Common myeloid progenitor, CD34-positive (primary cell): ENCODE measurements at regions of chr1 and their contacts with region 1.

Region 1: GRCh38 chr1:983799-984473 is 2.0 kb upstream of the PERM1 start:
- DNase-seq: peak in 2 of 3 donors; percentile 40 to 50
- H3K4me3 ChIP-seq: no peak overlapping the region
- H3K27ac ChIP-seq: no peak overlapping the region
- H3K4me1 ChIP-seq: peaks cover 0 to 1% (median 0%) of the 10 kb centered on the region in 4 experiments
- H3K27me3 ChIP-seq: peaks cover 0 to 52% (median 13%) of the 10 kb centered on the region in 5 experiments

Region 2: GRCh38 chr1:995665-996633 is 12.0 kb after region 1 on chr1:
- CTCF ChIA-PET with region 1: interaction called, 58 read pairs
- POLR2A ChIA-PET with region 1: interaction called, 3 read pairs
- DNase-seq: peak in 2 of 3 donors; percentile 61
- H3K4me3 ChIP-seq: no peak overlapping the region
- H3K27ac ChIP-seq: no peak overlapping the region
- H3K4me1 ChIP-seq: peaks cover 0 to 35% (median 34%) of the 10 kb centered on the region in 4 experiments
- H3K27me3 ChIP-seq: peaks cover 0 to 72% (median 10%) of the 10 kb centered on the region in 5 experiments

Region 3: GRCh38 chr1:1001461-1002204 is 17.7 kb after region 1 on chr1:
- CTCF ChIA-PET with region 1: interaction called, 17 read pairs
- POLR2A ChIA-PET with region 1: interaction called, 3 read pairs
- DNase-seq: peak in 1 of 3 donors; percentile 43
- H3K4me3 ChIP-seq: peak overlapping the region in 4 of 7 experiments; percentile 1 to 66 (median 31)
- H3K27ac ChIP-seq: peak overlapping the region in 1 of 2 experiments; percentile 49
- H3K4me1 ChIP-seq: peaks cover 0 to 65% (median 63%) of the 10 kb centered on the region in 4 experiments
- H3K27me3 ChIP-seq: peaks cover 0 to 70% (median 14%) of the 10 kb centered on the region in 5 experiments

Region 4: DNA sequence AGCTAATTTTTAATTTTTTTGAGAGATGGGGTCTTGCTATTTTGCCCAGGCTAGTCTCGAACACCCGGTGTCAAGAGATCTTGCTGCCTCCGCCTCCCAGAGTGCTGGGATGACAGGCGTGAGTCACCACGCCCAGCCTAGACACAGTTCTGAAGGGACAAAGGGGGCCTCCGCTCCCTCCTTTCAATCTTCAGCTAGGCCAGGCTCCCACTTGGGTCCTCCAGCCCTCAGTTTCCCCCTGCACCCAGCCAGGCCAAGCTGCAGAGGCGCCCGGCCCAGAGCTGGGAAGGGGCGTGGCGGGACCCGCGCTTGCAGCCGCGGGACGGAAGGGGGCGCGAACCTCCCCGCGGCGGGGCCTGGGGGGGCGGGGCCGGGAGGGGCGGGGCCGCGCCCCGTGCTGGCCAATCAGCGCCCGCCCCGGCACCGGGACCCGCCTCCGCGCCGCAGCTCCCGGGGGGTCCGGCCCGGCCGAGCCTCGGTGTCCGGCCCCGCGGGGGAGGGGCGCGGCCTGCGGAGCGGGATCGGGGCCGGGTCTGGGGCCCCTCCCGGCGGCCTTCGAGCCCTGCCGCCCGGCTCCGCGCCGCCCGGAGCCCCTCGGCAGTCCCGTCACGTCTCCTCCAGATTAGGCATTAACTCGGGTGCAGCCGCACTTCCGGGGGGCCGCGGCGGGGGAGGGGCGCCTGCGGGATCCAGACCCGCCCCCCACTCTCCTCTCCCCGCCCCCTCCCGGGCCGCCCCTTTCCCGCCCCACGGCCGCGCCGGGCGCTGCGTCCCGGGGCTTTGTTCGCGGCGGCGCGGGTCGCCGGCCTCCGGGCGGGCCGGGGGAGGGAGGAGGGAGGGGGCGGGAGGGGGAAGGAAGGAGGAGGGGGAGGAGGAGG is 35.4 kb after region 1 on chr1:
- CTCF ChIA-PET with region 1: interaction called, 17 read pairs
- POLR2A ChIA-PET with region 1: no interaction called
- DNase-seq: peak; percentile 61 to 77 (median 72)
- H3K4me3 ChIP-seq: peak overlapping the region in 5 of 7 experiments; percentile 28 to 71 (median 57)
- H3K27ac ChIP-seq: no peak overlapping the region
- H3K4me1 ChIP-seq: peaks cover 0 to 26% (median 21%) of the 10 kb centered on the region in 4 experiments
- H3K27me3 ChIP-seq: peaks cover 0 to 37% (median 8%) of the 10 kb centered on the region in 5 experiments

Region 5: DNA sequence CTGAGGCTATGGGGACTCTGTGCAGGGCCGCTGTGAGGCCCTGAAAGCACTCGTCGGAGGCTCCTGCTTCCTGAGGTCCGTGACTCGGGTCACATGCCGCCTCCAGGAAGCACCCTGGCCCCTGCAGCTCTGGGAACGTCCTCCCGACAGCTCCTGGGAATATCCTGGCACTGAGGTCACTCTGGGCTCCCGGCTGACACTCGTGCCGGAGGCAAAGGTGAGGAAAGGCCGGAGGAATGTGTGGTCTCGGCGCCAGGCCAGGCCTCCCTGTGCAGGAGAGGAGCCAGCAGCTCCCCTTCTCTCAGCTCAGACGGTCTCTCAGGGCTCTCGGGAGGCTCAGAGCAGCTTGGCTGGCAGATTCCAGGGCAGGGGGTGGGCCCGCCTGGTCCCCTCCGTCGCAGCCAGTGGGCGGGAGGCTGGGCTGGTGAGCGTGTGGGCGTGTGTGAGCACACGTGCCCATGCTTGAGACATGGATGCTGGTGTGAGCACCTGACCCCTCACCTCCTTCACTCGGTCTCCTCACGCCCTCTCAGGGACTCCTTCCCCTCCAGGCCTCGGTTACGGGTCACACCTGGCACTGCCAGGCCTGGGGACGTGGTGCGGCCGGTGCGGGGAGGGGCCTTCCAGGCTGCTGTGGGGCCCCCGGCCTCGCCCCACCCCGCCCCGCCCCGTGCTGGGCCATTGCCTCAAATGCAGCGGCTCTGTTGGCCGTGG is 95.6 kb after region 1 on chr1:
- CTCF ChIA-PET with region 1: no interaction called
- POLR2A ChIA-PET with region 1: no interaction called
- DNase-seq: peak; percentile 45 to 78 (median 70)
- H3K4me3 ChIP-seq: peak overlapping the region in 3 of 7 experiments; percentile 40 to 57 (median 53)
- H3K27ac ChIP-seq: no peak overlapping the region
- H3K4me1 ChIP-seq: peaks cover 0 to 13% (median 12%) of the 10 kb centered on the region in 4 experiments
- H3K27me3 ChIP-seq: peaks cover 0 to 20% (median 0%) of the 10 kb centered on the region in 5 experiments